Activated T-helper 1 cell treated with anti-CD3 and anti-CD28 coated beads, Interleukin-12 subunit alpha, Interleukin-12 subunit beta, Interleukin-2, Interleukin-4 antibody, amounts not matched to agents 30 ng/mL and 10 ng/mL and 1 ng/mL, durations not matched to agents 14 hours and 24 hours and 36 hours (primary cell): ENCODE measurements at regions of chr6 and their contacts with region 1.

Region 1: DNA sequence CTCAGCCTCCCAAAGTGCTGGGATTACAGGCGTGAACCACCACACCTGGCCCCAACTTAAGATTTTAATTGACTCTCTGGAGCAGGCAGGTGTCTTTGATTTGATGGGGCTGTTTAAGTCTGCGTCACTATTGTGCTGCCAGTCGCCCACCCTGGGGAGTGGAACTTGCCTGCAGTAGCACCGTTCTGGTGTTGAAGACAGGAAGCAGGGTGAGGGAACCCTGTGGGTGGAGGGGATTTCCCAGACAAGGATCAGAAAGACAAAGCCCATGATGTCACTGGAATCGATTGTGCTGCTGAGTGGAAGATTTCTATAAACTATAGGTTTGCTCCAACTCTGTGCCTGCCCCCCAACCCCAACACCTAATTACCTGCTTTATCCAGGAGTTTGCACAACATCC is 11.0 kb downstream of the ALDH8A1 start:
- DNase-seq: peak; percentile 41
- H3K4me3 Mint-ChIP-seq: no peak overlapping the region
- H3K27ac Mint-ChIP-seq: peak overlapping the region; percentile 5
- H3K4me1 Mint-ChIP-seq: peaks cover 39% of the 10 kb centered on the region
- H3K27me3 Mint-ChIP-seq: no peaks in the 10 kb centered on the region

Region 2: DNA sequence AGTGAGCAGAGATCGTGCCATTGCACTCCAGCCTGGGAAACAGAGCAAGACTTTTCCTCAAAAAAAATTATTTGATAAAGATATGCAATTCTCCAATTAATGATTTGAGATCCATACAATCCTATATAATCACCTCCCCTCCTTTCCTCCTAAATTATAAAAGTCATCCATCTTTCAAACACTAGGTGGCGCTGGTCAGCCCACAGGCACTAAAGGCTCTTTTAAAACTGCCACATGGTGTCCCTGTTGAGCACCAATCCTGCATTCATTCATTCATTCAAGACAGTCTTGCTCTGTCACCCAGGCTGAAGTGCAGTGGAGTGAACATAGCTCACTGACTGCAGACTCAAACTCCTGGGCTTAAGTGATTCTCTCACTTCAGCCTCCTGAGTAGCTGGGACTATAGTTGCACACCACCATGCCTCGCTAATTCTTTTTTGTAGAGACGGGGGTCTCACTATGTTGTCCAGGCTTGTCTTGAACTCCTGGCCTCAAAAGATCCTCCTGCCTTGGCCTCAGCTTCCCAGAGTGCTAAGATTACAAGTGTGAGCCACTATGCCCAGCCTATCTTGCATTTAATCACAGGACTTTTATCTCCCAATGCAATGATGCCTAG is 827.7 kb before region 1 on chr6:
- intact Hi-C with region 1: loop called (anchors 5 kb)
- DNase-seq: peak; percentile 24
- H3K4me3 Mint-ChIP-seq: no peak overlapping the region
- H3K27ac Mint-ChIP-seq: no peak overlapping the region
- H3K4me1 Mint-ChIP-seq: peaks cover 12% of the 10 kb centered on the region
- H3K27me3 Mint-ChIP-seq: peaks cover 9% of the 10 kb centered on the region

Region 3: GRCh38 chr6:134123666-134124208 is 815.2 kb before region 1 on chr6:
- intact Hi-C with region 1: loop called (anchors 1 kb)
- DNase-seq: no peak
- H3K4me3 Mint-ChIP-seq: no peak overlapping the region
- H3K27ac Mint-ChIP-seq: no peak overlapping the region
- H3K4me1 Mint-ChIP-seq: no peaks in the 10 kb centered on the region
- H3K27me3 Mint-ChIP-seq: peaks cover 3% of the 10 kb centered on the region

Region 4: DNA sequence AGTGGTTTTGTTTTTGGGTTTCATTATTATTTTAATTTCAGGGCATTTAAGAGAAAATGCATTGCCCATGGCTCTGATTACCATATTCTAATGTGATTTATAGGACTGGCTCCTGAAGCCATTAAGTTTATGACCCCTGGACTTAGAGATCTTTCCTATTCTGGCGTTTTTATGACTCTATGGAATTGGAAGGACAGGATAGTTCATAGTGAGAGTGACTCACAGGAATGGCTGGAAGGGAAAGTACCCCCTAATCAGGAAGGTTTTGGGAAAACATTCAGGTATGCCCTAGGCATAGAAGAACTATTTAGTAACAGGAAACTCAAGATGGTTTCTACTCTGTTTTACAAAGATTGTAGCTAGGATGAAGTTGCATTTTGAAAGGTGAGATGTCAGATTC is 777.9 kb before region 1 on chr6:
- intact Hi-C with region 1: loop called (anchors 1 kb)
- DNase-seq: no peak
- H3K4me3 Mint-ChIP-seq: no peak overlapping the region
- H3K27ac Mint-ChIP-seq: no peak overlapping the region
- H3K4me1 Mint-ChIP-seq: peaks cover 5% of the 10 kb centered on the region
- H3K27me3 Mint-ChIP-seq: no peaks in the 10 kb centered on the region

Region 5: GRCh38 chr6:134640975-134641429 is 297.9 kb before region 1 on chr6:
- intact Hi-C with region 1: loop called (anchors 2 kb)
- DNase-seq: peak; percentile 65
- H3K4me3 Mint-ChIP-seq: no peak overlapping the region
- H3K27ac Mint-ChIP-seq: no peak overlapping the region
- H3K4me1 Mint-ChIP-seq: peaks cover 33% of the 10 kb centered on the region
- H3K27me3 Mint-ChIP-seq: no peaks in the 10 kb centered on the region

Region 6: GRCh38 chr6:134882426-134883038 is 56.4 kb before region 1 on chr6:
- intact Hi-C with region 1: loop called (anchors 1 kb)
- DNase-seq: peak; percentile 31
- H3K4me3 Mint-ChIP-seq: no peak overlapping the region
- H3K27ac Mint-ChIP-seq: no peak overlapping the region
- H3K4me1 Mint-ChIP-seq: no peaks in the 10 kb centered on the region
- H3K27me3 Mint-ChIP-seq: peaks cover 24% of the 10 kb centered on the region

Region 7: DNA sequence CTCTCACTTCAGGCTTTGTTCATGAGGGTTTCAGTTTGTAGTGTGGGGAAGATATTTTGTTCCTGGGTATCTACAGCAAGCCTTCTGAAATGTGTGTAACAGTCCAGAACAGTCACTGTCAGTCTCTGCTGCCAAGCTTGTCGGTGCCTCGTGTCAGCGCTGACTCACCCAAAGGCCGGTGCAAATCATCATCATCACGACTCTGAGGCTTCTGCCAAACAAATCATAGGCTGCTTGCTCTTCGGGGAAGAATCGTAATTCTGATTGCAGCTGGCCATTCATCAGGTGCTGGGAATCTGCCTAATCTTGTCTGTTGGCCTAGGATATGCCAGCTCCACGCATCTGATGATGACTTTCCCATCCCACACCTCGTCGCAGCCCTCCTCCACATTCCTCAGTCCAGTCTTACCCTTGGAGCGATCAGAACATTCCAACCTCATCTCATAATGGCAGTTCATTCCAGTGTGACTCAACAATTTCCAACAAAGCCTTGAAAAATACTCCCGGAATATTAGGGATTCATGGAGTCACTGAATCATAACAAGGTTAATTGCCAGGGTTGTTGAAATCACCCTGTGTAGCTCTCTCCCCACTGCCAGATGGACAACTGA is 29.9 kb before region 1 on chr6:
- intact Hi-C with region 1: loop called (anchors 2 kb)
- DNase-seq: no peak
- H3K4me3 Mint-ChIP-seq: no peak overlapping the region
- H3K27ac Mint-ChIP-seq: no peak overlapping the region
- H3K4me1 Mint-ChIP-seq: no peaks in the 10 kb centered on the region
- H3K27me3 Mint-ChIP-seq: peaks cover 5% of the 10 kb centered on the region

Region 8: DNA sequence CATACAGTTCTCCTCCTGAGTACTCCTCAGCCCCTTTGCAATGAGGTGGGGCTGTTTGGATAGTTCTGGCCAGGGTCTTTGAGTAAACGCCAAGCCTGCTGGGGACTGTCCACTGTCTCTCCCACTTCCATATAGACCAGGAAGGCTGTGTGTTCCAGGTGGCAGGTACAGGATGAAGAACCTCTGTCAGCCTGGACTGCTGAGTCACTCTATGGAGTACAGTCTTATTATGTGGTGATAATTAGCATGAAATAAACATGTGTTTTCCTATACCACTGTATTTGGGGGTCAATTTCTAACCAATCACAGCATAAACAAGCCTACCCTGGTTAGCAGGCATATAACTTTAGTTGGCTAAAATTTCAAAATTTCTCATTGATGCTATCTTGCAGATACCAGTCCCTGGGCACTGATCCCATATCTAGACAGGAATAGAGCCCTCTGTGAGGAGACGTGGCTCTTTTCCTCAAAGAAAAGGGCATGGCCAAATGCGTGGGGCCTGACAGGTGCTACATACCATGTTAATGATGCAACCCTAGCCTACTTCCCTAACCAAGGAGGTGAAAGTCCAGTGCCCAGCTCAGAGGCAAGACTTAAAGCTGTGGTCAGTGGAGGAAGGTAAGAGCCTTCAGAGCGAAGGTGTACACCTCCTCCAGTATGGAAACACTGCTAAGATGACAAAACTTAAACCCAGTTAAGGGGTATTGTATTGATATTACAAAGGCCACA is 15.5 kb after region 1 on chr6:
- intact Hi-C with region 1: no loop called
- DNase-seq: no peak
- H3K4me3 Mint-ChIP-seq: no peak overlapping the region
- H3K27ac Mint-ChIP-seq: no peak overlapping the region
- H3K4me1 Mint-ChIP-seq: peaks cover 17% of the 10 kb centered on the region
- H3K27me3 Mint-ChIP-seq: no peaks in the 10 kb centered on the region